A549 (cell line): ENCODE measurements at regions of chr2 and their contacts with region 1.

Region 1: GRCh38 chr2:227406177-227407031 is 18.7 kb upstream of the SCYGR1 start:
- DNase-seq: peak; percentile 92 to 98
- ATAC-seq: peak; percentile 75 to 81
- H3K4me3 ChIP-seq: no peak overlapping the region
- H3K27ac ChIP-seq: peak overlapping the region; percentile 88 to 98
- H3K4me1 ChIP-seq: peaks cover 76% of the 10 kb centered on the region
- CTCF ChIP-seq: peak; percentile 91
- EP300 ChIP-seq: peak; percentile 65 to 72; a peak in 4 of 5 replicates
- POLR2A ChIP-seq: no peak
- RAD21 ChIP-seq: peak; percentile 98

Region 2: GRCh38 chr2:227267410-227268148 is 138.8 kb before region 1 on chr2:
- CTCF ChIA-PET with region 1: no interaction called
- POLR2A ChIA-PET with region 1: no interaction called
- DNase-seq: peak; percentile 13 to 27
- ATAC-seq: peak; percentile 78 to 89; a peak in 5 of 6 replicates
- H3K4me3 ChIP-seq: no peak overlapping the region
- H3K27ac ChIP-seq: peak overlapping the region in 1 of 2 experiments; percentile 39; a peak in 1 of 6 replicates
- H3K4me1 ChIP-seq: peaks cover 17% of the 10 kb centered on the region
- CTCF ChIP-seq: no peak
- EP300 ChIP-seq: no peak
- POLR2A ChIP-seq: no peak
- RAD21 ChIP-seq: no peak

Region 3: GRCh38 chr2:227376911-227377396 is 29.4 kb before region 1 on chr2:
- CTCF ChIA-PET with region 1: interaction called, 14 read pairs
- POLR2A ChIA-PET with region 1: no interaction called
- DNase-seq: peak in 1 of 2 experiments; percentile 53
- ATAC-seq: peak in 1 of 2 experiments; percentile 27; a peak in 3 of 6 replicates
- H3K4me3 ChIP-seq: peak overlapping the region; percentile 37
- H3K27ac ChIP-seq: peak overlapping the region; percentile 95 to 99
- H3K4me1 ChIP-seq: peaks cover 58% of the 10 kb centered on the region
- CTCF ChIP-seq: no peak
- EP300 ChIP-seq: no peak
- POLR2A ChIP-seq: no peak
- RAD21 ChIP-seq: no peak

Region 4: GRCh38 chr2:227462462-227462951 is 56.1 kb after region 1 on chr2:
- CTCF ChIA-PET with region 1: interaction called, 20 read pairs
- POLR2A ChIA-PET with region 1: interaction called, 10 read pairs
- DNase-seq: no peak
- ATAC-seq: no peak
- H3K4me3 ChIP-seq: no peak overlapping the region
- H3K27ac ChIP-seq: peak overlapping the region; percentile 39 to 96; a peak in 5 of 6 replicates
- H3K4me1 ChIP-seq: peaks cover 77% of the 10 kb centered on the region
- CTCF ChIP-seq: no peak
- EP300 ChIP-seq: no peak
- POLR2A ChIP-seq: no peak
- RAD21 ChIP-seq: no peak

Region 5: DNA sequence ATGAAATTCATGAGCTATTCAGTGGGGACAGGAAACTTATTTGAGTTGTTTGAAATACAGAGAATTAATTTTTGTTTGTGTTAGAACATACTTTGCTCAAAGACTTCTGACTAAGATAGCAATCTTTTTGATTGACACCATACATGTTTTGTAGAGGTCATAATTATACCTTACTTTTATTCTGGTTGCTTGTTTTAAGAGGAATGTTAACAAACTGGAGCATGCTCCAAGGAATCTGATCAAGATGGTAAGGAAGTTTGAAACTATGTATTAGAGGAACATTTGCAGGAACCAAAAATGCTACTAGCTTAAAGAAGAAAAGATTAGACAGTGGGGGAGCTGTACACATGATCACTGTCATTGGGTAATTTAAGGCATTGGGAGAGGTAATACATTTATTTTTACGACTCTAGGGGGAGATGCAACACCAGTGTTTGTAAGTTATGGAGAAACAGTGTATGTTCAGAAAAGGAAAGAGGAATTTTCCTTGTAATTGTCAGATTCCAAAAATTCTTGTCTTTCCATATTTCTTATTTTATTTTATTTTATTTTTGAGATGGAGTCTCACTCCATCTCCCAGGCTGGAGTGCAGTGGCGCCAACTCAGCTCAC is 73.6 kb after region 1 on chr2:
- CTCF ChIA-PET with region 1: interaction called, 63 read pairs
- POLR2A ChIA-PET with region 1: interaction called, 3 read pairs
- DNase-seq: peak; percentile 41 to 65
- ATAC-seq: peak; percentile 79 to 89; a peak in 5 of 6 replicates
- H3K4me3 ChIP-seq: no peak overlapping the region
- H3K27ac ChIP-seq: peak overlapping the region; percentile 7 to 20; a peak in 2 of 6 replicates
- H3K4me1 ChIP-seq: peaks cover 93% of the 10 kb centered on the region
- CTCF ChIP-seq: peak; percentile 73
- EP300 ChIP-seq: no peak
- POLR2A ChIP-seq: no peak
- RAD21 ChIP-seq: peak; percentile 71 to 74

Region 6: GRCh38 chr2:227774011-227774624 is 367.7 kb after region 1 on chr2:
- CTCF ChIA-PET with region 1: interaction called, 16 read pairs
- POLR2A ChIA-PET with region 1: no interaction called
- DNase-seq: peak in 1 of 2 experiments; percentile 26
- ATAC-seq: peak in 1 of 2 experiments; percentile 71; a peak in 3 of 6 replicates
- H3K4me3 ChIP-seq: no peak overlapping the region
- H3K27ac ChIP-seq: peak overlapping the region in 1 of 2 experiments; percentile 22; a peak in 2 of 6 replicates
- H3K4me1 ChIP-seq: peaks cover 10% of the 10 kb centered on the region; the same call in 2 of the 3 replicates
- CTCF ChIP-seq: peak; percentile 37; the same call in 2 of the 3 replicates
- EP300 ChIP-seq: no peak
- POLR2A ChIP-seq: no peak
- RAD21 ChIP-seq: peak in 1 of 2 experiments; percentile 37; a peak in 2 of 5 replicates